ENCODE measurements at regions of chr7 and their contacts with region 1.

Region 1: DNA sequence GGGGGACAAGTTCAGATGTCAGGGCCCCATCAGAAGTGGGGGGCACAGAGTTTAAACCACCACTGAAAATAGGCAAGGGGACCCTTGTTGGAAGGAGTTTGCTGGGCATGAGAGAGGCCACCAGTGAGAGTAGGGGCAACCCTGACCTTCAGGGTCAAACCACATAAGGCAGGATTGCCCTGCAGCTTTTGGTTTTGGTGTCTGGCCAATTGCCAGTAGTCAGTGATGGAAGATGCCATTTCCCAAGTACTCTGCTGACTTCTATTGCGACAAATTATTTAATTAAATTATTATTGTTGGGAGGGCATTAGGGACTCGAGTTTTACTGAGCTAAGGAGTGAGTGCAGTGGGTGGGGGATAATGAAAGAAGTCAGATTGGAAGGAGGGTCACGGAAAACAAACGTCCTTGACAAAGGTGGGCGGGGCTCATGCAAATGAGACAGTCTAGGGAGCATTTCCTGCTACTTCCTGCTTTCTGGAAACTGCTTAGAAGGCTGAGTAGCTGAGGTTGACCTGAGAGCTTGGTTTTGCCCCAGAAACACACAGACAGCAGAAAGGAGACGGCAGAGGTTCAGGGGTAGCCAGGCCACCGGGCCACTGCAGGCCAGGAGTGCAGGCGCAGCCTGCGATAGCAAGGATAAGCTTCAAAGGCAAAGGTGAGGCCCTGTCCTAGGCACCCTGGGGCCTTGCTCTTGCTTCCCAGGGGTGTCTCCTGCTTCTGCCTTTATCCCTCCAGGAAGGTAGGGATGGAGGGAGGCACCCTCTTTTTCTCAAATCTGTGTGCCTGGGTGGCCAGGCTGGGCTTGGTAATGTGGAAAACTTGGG is 74.1 kb upstream of the ANLN start:
- DNase-seq: no peak
- H3K4me3 ChIP-seq: no peak overlapping the region
- H3K27ac ChIP-seq: no peak overlapping the region
- H3K4me1 ChIP-seq: no peaks in the 10 kb centered on the region
- H3K27me3 ChIP-seq: no peaks in the 10 kb centered on the region
- CTCF ChIP-seq: no peak
- EP300 ChIP-seq: no peak
- POLR2A ChIP-seq: no peak

Region 2: GRCh38 chr7:35985126-35985754 is 330.3 kb before region 1 on chr7:
- intact Hi-C with region 1: loop called (anchors 1 kb)
- DNase-seq: peak; percentile 89
- H3K4me3 ChIP-seq: no peak overlapping the region
- H3K27ac ChIP-seq: no peak overlapping the region
- H3K4me1 ChIP-seq: peaks cover 0 to 19% (median 14%) of the 10 kb centered on the region in 4 donors
- H3K27me3 ChIP-seq: no peaks in the 10 kb centered on the region
- CTCF ChIP-seq: peak; percentile 85 to 94 (median 91)
- EP300 ChIP-seq: no peak
- POLR2A ChIP-seq: no peak

Region 3: DNA sequence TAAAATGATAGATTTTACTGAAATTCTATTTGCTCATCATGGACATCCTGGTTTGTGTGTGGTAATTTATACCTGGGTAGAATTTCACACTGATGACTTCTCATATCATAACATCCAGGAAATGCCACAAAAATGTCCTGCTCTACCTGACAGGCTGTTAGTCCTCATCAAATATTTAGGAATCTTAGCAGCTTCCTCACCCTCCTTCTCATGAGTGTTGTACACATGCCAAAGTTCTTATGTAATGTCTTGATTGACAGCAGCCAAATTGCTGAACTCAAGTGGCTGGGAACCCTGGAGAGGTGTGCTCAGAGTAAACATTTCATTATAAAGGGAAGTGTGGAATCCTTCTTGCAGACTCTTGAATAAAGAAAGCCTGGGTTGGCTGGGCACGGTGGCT is 153.5 kb before region 1 on chr7:
- intact Hi-C with region 1: no loop called
- DNase-seq: no peak
- H3K4me3 ChIP-seq: no peak overlapping the region
- H3K27ac ChIP-seq: no peak overlapping the region
- H3K4me1 ChIP-seq: peaks cover 0 to 67% (median 58%) of the 10 kb centered on the region in 4 donors
- H3K27me3 ChIP-seq: no peaks in the 10 kb centered on the region
- CTCF ChIP-seq: no peak
- EP300 ChIP-seq: no peak
- POLR2A ChIP-seq: no peak